Heart right ventricle (tissue), 16 donors: ENCODE measurements at regions of chr20 and their contacts with region 1.

Region 1: GRCh38 chr20:19735446-19735845 is 22.6 kb upstream of the RIN2 start:
- DNase-seq: peak; percentile 65 to 77
- ATAC-seq: peak; percentile 85 to 99 (median 94)
- H3K4me3 ChIP-seq: no peak overlapping the region
- H3K27ac ChIP-seq: peak overlapping the region in 9 of 10 donors; percentile 5 to 86 (median 69)
- H3K4me1 ChIP-seq: peaks cover 8 to 33% (median 18%) of the 10 kb centered on the region in 9 donors
- H3K27me3 ChIP-seq: no peaks in the 10 kb centered on the region
- CTCF ChIP-seq: no peak

Region 2: DNA sequence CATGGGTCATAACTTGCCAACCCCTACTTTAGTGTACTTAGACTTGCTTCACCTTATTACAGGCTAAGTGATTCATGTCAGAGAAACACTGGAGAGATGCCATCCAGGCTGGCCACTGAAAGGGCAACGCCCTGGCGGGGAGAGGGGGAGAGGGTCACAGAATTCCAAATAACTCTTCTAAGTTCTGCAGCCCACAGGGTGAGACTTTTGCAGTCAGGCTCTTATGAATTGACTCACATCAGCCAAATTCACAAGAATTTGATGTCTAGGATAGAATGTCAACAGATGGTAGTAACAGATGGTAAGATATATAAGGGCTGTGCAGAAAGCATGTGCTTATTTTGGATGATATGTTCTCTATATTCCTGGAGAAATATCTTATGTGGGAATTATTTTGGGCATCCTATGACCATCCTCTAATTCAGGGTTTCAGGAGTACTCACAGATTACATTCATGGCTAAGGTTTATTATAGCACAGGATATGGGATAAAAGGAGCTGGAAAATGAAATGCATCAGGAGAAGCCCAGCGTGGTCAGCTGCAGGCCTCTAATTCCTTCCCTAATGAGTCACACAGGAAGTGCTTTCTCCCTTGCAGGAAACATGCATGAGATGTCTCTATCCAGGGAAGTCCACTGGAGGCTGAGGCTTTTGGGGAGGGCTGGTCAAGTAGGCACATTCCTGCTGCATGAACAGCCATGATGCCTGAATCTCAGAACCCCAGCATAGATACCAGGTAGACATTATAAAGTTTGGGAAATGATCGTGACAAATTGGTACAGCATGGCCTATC is 36.1 kb before region 1 on chr20:
- intact Hi-C with region 1: loop called in 3 of 10 experiments (anchors 5 to 10 kb)
- DNase-seq: no peak
- ATAC-seq: peak in 2 of 8 donors; percentile 49 to 66
- H3K4me3 ChIP-seq: no peak overlapping the region
- H3K27ac ChIP-seq: no peak overlapping the region
- H3K4me1 ChIP-seq: peaks cover 0 to 19% (median 7%) of the 10 kb centered on the region in 9 donors
- H3K27me3 ChIP-seq: no peaks in the 10 kb centered on the region
- CTCF ChIP-seq: no peak